ENCODE measurements at regions of chr4 and their contacts with region 1.

Region 1: GRCh38 chr4:127518022-127518421 is 114.7 kb upstream of the INTU start:
- DNase-seq: no peak
- H3K4me3 ChIP-seq: no peak overlapping the region
- H3K27ac ChIP-seq: no peak overlapping the region
- H3K4me1 ChIP-seq: no peaks in the 10 kb centered on the region
- H3K27me3 ChIP-seq: 0 out of 2 replicates have a peak, but pooled peaks cover 4% of the 10 kb centered on the region
- CTCF ChIP-seq: no peak

Region 2: DNA sequence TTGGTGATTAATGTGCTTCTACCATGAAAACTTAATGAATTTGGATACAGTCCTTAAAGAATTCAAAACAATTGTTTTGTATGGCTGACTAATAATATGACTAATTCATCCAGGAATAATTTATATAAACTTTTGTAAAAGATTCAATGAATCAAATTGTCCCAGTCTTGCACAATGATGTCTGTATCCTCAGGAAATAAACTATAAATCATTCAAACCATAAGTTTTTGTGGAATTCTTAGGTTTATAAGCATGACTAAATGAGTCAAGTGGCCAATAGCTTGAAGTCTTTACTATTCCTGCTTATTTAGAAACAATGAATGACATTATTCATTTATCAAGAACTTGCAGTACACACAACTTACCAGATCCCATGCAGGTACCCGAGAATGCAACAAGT is 820.3 kb before region 1 on chr4:
- CTCF ChIA-PET with region 1: no interaction called
- POLR2A ChIA-PET with region 1: no interaction called
- intact Hi-C with region 1: no loop called
- DNase-seq: no peak
- H3K4me3 ChIP-seq: no peak overlapping the region
- H3K27ac ChIP-seq: no peak overlapping the region
- H3K4me1 ChIP-seq: no peaks in the 10 kb centered on the region
- H3K27me3 ChIP-seq: no peaks in the 10 kb centered on the region
- CTCF ChIP-seq: no peak

Region 3: GRCh38 chr4:129223955-129224354 is 1705.9 kb after region 1 on chr4:
- CTCF ChIA-PET with region 1: no interaction called
- POLR2A ChIA-PET with region 1: no interaction called
- intact Hi-C with region 1: loop called (anchors 10 kb)
- DNase-seq: no peak
- H3K4me3 ChIP-seq: no peak overlapping the region
- H3K27ac ChIP-seq: no peak overlapping the region
- H3K4me1 ChIP-seq: no peaks in the 10 kb centered on the region
- H3K27me3 ChIP-seq: no peaks in the 10 kb centered on the region
- CTCF ChIP-seq: no peak